ENCODE measurements at regions of chr14 and their contacts with region 1.

Region 1: DNA sequence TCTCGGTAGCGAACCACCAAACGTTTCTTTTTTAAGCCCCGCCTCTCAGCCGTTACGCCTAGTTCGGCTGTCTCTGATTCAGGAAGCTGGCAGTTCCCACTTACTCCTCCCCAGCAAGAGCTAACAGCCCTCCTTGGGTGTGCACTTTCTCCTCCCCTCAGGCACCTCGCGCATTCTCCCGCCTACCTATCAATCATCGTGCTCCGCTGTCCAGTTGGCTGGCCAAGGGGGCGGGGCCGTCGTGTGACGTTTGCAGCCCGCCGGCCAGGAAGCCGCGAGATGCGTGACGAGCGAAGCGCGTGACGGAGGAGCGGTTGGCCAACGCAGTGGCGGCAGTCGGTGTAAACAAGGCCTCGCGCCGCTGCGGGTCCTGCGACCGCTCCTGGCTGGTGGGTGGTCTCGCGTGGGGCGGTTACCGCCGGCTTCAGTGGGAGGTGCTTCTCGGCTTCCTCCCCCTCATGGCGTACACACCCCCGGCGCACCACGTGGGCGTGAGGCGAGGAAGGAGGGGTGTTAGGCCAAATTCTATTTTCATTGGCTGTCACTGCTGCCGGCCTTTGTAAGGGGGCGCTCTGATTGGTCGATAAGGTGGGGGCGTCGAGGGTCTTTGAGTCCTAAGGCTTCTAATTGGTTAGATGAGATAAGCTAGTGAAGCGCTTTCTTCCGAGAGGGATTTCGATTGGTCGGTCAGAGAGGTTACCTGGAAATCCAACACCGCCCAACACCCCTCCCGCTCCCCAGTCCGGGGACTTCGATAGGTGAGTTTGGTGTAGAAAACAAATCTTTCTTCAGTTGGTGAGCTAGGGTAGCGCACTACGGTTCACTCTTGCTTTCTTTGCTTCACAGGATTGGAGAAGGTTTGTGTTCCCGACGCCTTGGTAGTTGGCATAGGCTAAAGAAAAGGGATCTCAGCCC is at the starts of genes DCAF11 and NRL:
- DNase-seq: peak; percentile 97

Region 2: GRCh38 chr14:24058260-24058950 is 56.4 kb before region 1 on chr14:
- CTCF ChIA-PET with region 1: interaction called, 114 read pairs
- POLR2A ChIA-PET with region 1: interaction called, 26 read pairs
- DNase-seq: peak; percentile 85

Region 3: DNA sequence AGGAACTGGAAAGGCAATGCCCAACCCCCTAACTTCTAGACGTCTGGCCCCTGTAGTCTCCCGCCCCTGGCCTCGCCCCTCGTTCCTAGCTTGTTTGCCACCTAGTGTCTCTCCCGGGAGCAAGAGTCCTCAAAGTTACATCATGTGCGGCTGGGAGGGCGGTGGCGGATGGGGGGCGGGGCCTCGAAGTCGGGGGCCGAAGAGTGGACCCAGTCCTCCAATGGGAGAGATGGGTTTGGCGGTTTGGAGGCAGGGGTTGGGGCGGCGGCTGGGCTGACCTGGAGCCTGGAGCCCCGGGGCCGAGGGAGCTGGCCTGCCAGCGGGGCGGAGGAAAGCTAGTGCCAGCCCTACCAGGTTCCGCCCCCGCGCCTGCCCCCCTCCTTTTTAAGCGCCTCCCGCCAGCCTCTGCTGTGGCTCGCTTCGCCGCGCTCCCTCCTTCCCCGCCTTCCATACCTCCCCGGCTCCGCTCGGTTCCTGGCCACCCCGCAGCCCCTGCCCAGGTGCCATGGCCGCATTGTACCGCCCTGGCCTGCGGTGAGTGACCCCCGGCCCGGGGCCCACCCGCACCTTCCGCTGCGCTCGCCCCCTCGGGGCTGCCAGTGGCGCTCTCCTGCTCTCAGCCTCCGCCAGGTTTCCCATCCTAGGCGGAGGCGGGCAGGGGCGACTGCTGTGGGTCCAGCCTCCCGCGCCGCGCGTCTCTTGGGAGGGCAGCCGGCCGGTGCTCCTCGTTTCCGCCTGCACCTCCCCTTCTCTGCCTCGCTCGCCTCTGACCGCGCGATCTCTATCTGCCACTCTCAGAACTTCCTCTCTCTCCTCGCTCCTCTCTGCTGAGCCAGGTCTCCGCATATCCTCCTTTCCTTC is 20.7 kb before region 1 on chr14 and contains the start of gene PCK2:
- CTCF ChIA-PET with region 1: interaction called, 4 read pairs
- POLR2A ChIA-PET with region 1: interaction called, 162 read pairs
- DNase-seq: peak; percentile 86

Region 4: DNA sequence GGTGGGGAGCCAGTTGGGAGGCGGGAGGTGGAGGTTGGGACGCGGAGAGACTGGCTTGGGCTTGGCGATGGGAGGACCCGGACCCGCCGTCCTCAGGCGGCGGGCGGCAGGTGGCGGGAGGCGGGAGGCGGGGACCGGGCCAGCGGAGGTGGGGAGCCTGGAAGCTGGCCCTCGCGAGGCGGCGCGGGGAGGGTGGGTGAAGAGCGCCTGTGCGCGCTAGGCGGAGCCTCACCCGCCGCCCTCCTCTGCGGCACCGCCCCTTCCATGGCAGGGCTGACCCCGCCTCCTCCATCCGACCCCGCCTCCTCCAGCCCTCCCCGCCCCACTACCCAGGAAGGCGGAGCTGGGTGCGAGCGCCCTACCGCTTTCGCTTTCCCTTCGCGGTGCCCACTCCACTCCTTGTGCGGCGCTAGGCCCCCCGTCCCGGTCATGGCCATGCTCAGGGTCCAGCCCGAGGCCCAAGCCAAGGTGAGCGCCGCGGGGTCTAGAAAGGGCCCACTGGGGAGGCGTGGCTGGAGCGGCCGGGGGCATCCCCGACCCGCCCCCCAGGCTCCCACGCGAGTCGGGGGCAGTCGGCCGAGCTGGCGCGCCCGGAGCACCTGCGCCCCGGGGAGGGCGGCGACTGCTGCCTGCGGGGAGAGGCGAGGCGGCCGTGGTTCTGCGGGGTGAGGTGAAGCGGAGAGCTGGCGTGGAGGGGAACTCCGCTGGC is 21.2 kb after region 1 on chr14 and contains the start of gene PSME1:
- CTCF ChIA-PET with region 1: interaction called, 3 read pairs
- POLR2A ChIA-PET with region 1: interaction called, 62 read pairs
- DNase-seq: peak; percentile 91

Region 5: GRCh38 chr14:24146978-24147760 is 32.4 kb after region 1 on chr14 and contains the start of gene RNF31:
- CTCF ChIA-PET with region 1: interaction called, 5 read pairs
- POLR2A ChIA-PET with region 1: interaction called, 56 read pairs
- DNase-seq: peak; percentile 94

Region 6: GRCh38 chr14:24188251-24189058 is 73.7 kb after region 1 on chr14 and contains the start of gene IPO4:
- CTCF ChIA-PET with region 1: no interaction called
- POLR2A ChIA-PET with region 1: interaction called, 12 read pairs
- DNase-seq: peak; percentile 98

Region 7: GRCh38 chr14:24255931-24256711 is 141.3 kb after region 1 on chr14:
- CTCF ChIA-PET with region 1: no interaction called
- POLR2A ChIA-PET with region 1: no interaction called
- DNase-seq: no peak